Thyroid gland (tissue), 4 donors: ENCODE measurements at regions of chr19 and their contacts with region 1.

Region 1: DNA sequence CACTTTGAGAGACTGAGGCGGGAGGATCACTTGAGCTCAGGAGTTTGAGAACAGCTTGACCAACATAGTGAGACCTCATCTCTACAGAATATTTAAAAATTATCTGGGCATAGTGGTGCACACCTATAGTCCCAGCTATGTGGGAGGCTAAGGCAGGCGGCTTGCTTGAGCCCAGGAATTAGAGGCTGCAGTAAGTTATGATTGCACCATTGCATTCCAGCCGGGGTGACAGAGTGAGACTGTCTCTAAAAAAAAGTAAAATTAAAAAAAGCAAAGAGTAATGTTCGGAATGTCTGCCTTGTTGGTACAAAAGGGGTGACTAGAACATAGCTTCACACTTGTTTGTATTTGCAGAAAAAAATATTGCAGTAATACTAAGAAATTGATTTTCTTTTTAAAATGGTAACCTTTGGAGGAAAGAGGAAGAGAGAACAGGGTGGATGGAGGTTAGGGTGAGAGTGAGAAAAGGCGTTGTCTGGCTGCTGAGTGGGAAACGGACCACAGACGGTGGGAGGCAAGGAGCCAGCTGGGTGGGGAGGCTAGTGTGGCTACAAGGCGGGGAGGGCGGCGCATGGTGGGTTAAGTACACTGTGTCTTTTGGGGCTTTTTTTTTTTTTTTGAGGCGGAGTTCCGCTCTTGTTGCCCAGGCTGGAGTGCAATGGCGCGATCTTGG is 10.2 kb downstream of the PPP1R14A start:
- DNase-seq: no peak
- H3K4me3 ChIP-seq: no peak overlapping the region
- H3K27ac ChIP-seq: no peak overlapping the region
- H3K4me1 ChIP-seq: peaks cover 0 to 13% of the 10 kb centered on the region in 2 donors
- H3K27me3 ChIP-seq: no peaks in the 10 kb centered on the region
- CTCF ChIP-seq: no peak
- POLR2A ChIP-seq: no peak

Region 2: DNA sequence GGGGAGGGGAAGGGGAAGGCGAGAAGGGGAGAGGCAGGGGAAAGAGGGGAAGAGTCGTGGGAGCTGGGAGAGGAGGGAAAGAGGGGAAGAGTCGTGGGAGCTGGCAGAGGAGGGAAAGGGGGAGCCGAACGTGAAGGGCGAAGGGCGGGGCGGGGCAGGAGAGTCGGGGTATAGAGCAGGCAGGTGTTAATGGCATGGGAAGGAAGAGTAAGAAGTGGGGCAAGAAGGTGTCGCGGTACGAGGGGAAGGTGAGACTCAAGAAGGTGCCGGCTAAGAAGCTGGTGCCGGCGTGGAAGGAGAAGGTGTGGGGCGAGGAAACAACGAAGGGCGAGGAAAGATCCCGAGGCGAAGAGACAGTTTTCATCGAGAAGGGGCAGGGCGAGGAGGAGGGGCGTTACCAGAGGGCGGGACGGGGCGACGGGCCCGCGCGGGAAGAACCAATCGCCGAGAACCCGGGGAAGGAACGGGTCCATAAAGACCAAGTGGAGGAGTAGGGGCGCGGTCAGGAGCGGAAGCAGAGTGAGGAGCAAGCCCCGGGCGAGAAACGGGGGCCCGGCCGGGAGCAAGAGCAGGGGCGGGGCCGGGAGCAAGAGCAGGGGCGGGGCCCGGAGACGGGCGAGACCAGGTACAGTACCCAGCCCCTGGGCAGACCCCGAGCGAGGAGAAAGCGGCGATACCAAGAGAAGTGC is 90.1 kb after region 1 on chr19:
- intact Hi-C with region 1: loop called (anchors 2 kb)
- DNase-seq: peak; percentile 96
- H3K4me3 ChIP-seq: peak overlapping the region; percentile 6 to 90 (median 78)
- H3K27ac ChIP-seq: peak overlapping the region; percentile 91 to 94 (median 94)
- H3K4me1 ChIP-seq: peaks cover 9 to 15% of the 10 kb centered on the region in 2 donors
- H3K27me3 ChIP-seq: no peaks in the 10 kb centered on the region
- CTCF ChIP-seq: no peak
- POLR2A ChIP-seq: peak in 1 of 2 donors; percentile 70